ENCODE measurements at regions of chr1 and their contacts with region 1.

Region 1: DNA sequence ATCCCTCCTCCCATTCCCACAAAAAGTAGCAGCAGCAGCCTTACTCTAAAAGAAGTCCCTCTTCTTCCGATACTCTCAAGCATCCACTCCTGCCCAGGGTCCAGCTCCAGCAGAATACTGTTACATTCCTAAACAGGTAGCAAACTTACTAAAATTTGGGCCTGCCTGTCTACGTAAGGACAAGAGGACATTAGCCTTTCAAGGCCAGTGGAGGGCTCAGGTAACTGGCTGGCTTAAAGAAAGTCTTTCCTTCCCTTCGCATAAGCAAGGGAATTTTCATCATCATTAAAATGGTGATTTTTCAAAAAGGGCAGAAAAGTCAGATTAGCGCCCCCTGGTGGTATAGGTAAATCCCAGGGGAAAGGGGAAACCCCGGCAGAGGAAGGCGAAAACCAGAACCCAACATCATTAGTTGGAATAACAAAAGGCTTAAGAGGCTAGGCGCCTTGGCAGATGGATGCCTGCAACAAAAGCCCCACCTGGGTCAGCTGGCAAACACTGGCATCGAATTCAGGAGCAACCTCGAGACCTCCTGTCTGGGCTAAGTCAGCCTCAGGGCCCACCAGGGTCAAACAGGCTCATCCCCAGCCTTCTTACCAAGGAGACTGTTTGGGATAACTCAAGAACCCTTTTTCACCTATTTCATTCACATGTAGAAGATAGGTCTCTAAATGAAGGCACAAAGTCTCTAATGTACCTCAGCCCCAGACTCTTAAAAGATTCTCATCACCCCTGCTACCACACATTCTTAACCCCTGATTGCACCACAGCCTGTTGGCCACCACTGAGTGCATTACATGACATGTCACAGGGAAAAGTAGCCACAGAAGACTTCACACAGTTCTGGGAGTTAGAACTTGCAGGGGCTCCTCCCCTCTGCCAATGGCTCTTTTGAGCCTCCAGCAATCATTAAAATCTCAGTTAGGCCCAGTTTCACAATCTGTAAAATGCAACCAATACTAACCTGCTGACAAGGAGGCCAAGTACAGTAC is 36.7 kb downstream of the ERI3 start:
- DNase-seq: peak; percentile 65 to 81 (median 67)
- ATAC-seq: peak; percentile 81
- H3K4me3 ChIP-seq: no peak overlapping the region
- H3K27ac ChIP-seq: no peak overlapping the region
- H3K4me1 ChIP-seq: no peaks in the 10 kb centered on the region; a peak in 1 of 5 replicates
- H3K27me3 ChIP-seq: no peaks in the 10 kb centered on the region
- CTCF ChIP-seq: peak; percentile 71 to 92 (median 88)
- EP300 ChIP-seq: no peak
- POLR2A ChIP-seq: no peak
- RAD21 ChIP-seq: peak; percentile 52 to 68

Region 2: DNA sequence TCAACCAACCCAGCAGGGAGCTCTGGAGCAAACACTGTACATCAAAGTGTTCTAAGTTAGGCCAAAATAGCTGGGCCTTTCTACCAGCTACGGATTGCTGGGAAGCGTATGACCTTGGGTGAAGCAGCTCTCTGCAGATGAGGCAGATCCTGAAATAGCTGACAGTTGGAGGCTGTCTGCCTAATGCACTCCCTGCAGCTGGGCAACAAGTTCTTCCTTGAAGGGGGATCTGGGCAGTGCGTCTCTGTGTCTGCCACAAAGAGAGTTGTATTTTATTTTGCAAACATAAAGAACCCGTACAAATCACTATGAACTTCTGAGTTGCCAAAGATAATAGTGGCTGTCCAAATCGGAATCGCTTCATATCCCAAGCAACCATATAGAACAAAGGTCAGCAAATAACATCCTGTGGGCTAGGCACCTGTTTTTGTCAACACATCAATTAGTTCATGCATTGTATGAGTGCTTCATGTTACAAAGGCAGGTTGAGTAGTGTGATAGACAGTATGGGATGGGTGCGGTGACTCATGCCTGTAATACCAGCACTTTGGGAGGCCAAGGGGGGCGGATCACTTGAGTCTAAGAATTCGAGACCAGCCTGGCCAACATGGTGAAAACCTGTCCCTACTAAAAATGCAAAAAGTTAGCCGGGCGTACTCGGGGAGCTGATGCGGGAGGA is 228.9 kb before region 1 on chr1:
- CTCF ChIA-PET with region 1: no interaction called
- POLR2A ChIA-PET with region 1: no interaction called
- in situ Hi-C with region 1: no loop called
- intact Hi-C with region 1: loop called (anchors 1 kb)
- DNase-seq: peak in 1 of 4 experiments; percentile 46
- ATAC-seq: peak; percentile 56
- H3K4me3 ChIP-seq: no peak overlapping the region
- H3K27ac ChIP-seq: no peak overlapping the region
- H3K4me1 ChIP-seq: peaks cover 3 to 19% of the 10 kb centered on the region in 2 experiments; a peak in 3 of 5 replicates
- H3K27me3 ChIP-seq: no peaks in the 10 kb centered on the region; a peak in 1 of 5 replicates
- CTCF ChIP-seq: no peak
- EP300 ChIP-seq: no peak
- POLR2A ChIP-seq: no peak
- RAD21 ChIP-seq: no peak

Region 3: DNA sequence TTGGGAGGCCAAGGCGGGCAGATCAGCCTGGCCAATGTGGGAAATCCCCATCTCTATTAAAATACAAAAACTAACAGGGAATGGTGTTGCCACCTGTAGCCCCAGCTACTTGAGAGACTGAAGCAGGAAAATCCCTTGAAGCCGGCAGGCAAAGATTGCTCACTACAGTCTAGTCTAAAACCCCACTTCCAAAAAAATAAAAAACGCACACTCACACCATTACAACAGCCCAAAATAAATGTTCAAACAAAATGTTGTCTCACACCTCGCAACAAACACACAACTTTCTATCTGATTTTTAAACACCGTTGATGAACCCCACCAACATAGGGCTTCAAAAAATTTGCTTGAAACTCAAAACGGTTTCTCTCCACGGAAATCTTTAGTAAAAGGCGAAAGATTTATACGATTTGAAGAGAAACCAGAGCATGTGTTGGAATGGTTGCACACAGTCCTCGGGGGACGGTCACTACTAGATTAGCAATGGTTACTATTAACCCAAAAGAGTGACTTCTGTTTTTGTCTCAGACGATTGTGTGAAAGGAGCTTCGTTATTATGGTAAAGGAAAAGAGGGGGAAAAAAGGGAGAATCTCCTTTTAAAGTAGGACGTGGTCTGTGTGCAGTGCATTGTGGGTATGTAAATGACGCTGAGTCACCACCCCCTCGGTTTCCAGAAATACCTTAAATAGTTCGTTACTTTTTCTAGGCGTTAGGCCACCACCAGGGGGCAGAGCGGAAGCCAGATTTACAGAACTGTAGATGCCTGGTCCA is 412.5 kb after region 1 on chr1 and contains the start of gene RNU5D-1:
- CTCF ChIA-PET with region 1: no interaction called
- POLR2A ChIA-PET with region 1: no interaction called
- in situ Hi-C with region 1: no loop called
- intact Hi-C with region 1: no loop called
- DNase-seq: peak; percentile 87 to 99 (median 90)
- ATAC-seq: peak; percentile 87
- H3K4me3 ChIP-seq: 0 out of 2 replicates have a peak within 1 kb of the TSS, but pooled peaks have one; percentile 3
- H3K27ac ChIP-seq: peak within 1 kb of the TSS; percentile 100
- H3K4me1 ChIP-seq: peaks cover 11 to 16% of the 10 kb centered on the region in 2 experiments
- H3K27me3 ChIP-seq: no peaks in the 10 kb centered on the region
- CTCF ChIP-seq: peak; percentile 79 to 97 (median 93)
- EP300 ChIP-seq: peak; percentile 80
- POLR2A ChIP-seq: peak; percentile 100
- RAD21 ChIP-seq: peak; percentile 4 to 54
- polyA plus RNA-seq, gene RNU5D-1: not detected

Measured in K562 (cell line).